Dorsolateral prefrontal cortex (tissue), 120 donors: ENCODE measurements at regions of chr5 and their contacts with region 1.

Region 1: DNA sequence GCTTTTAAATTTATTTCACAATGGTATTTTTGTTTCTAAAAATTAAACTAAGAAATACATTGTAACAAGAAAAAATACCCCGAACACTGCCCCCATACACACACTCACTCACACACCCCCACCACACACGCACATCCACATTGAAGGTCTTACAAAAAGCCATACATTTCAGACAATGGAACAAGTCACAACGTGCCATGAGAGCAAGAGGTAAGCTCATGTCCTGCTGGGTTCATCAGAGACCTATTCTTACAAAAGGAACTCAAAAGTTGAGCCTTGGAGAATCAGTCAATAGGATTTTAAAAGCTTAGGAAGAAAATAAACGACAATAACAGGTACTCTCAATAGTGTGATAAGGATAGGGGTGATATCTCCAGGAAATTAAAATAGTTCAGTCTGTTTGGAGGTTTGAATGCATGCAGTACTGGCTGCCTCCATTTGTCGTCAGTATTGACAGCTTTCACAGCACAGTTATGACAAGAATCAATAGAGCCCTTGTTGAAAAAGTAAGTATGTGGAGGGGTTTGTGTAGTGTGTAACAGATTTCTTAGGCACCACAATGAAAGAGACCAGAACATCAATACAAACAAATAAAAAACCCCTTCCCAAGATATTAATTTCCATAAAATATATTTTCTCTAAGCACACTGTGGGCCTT is 1826.2 kb upstream of the CDH6 start:
- DNase-seq: no peak
- H3K4me3 ChIP-seq: no peak overlapping the region
- H3K27ac ChIP-seq: no peak overlapping the region
- H3K27me3 ChIP-seq: no peaks in the 10 kb centered on the region
- CTCF ChIP-seq: peak in 44 of 56 donors; percentile 10 to 73 (median 38)

Region 2: GRCh38 chr5:29697785-29698414 is 330.6 kb after region 1 on chr5:
- intact Hi-C with region 1: loop called in 1 of 2 experiments (anchors 2 kb)
- DNase-seq: no peak
- H3K4me3 ChIP-seq: no peak overlapping the region
- H3K27ac ChIP-seq: no peak overlapping the region
- H3K27me3 ChIP-seq: peaks cover 0 to 6% (median 0%) of the 10 kb centered on the region in 45 donors
- CTCF ChIP-seq: peak in 32 of 56 donors; percentile 8 to 59 (median 31)